Activated CD8-positive, alpha-beta memory T cell treated with anti-CD3 and anti-CD28 coated beads, Interleukin-2, amount 10 ng/mL, durations not matched to agents 7 days and 5 days (primary cell): ENCODE measurements at regions of chr12 and their contacts with region 1.

Region 1: GRCh38 chr12:96906849-96907670 is at the start of gene NEDD1:
- DNase-seq: peak; percentile 89
- ATAC-seq: peak; percentile 88
- H3K4me3 Mint-ChIP-seq: peak within 1 kb of the TSS; percentile 99
- H3K27ac Mint-ChIP-seq: peak within 1 kb of the TSS; percentile 97
- H3K4me1 Mint-ChIP-seq: peaks cover 44% of the 10 kb centered on the region
- H3K27me3 Mint-ChIP-seq: peaks cover 14% of the 10 kb centered on the region
- total RNA-seq, gene NEDD1: 43.9 to 44.5 TPM

Region 2: DNA sequence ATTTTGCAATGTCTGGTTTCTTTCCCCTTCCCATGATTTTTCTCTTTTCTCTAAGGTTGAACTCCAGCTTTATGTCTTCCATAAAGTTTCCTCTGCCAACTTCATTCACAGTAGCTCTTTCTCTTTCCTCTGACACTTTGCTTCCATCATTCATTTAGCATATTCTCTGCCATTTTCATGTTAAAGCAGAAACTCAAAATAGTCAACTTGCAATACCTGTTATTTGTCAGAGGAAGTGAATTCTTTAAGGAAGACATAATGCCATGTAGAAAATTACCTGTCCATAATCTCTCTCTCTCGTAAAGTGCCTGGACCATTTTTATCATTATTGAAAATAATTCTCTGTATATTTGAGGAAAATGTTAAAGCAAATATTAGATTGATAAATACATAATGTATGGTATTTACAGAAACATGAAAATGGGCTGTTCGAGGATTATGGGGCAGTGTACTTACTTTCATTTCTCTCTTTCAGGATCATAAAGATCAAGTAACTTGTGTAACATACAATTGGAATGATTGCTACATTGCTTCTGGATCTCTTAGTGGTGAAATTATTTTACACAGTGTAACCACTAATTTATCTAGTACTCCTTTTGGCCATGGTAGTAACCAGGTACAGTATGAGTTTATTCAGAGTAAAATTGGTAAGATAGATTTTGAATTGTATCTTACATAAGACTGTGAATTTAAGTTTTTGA is 12.6 kb after region 1 on chr12:
- CTCF ChIA-PET with region 1: interaction called, 10 read pairs
- DNase-seq: no peak
- ATAC-seq: no peak
- H3K4me3 Mint-ChIP-seq: no peak overlapping the region
- H3K27ac Mint-ChIP-seq: no peak overlapping the region
- H3K4me1 Mint-ChIP-seq: peaks cover 5% of the 10 kb centered on the region
- H3K27me3 Mint-ChIP-seq: no peaks in the 10 kb centered on the region